BJ (cell line): ENCODE measurements at regions of chr18 and their contacts with region 1.

Region 1: GRCh38 chr18:50986360-50987087 is 18.7 kb downstream of the ELAC1 start:
- DNase-seq: peak; percentile 60
- H3K4me3 ChIP-seq: no peak overlapping the region
- H3K27me3 ChIP-seq: no peaks in the 10 kb centered on the region
- CTCF ChIP-seq: peak; percentile 11; the same call in 1 of the 2 replicates

Region 2: GRCh38 chr18:51009072-51009471 is 22.5 kb after region 1 on chr18:
- CTCF ChIA-PET with region 1: interaction called, 12 read pairs
- POLR2A ChIA-PET with region 1: no interaction called
- DNase-seq: no peak
- H3K4me3 ChIP-seq: no peak overlapping the region
- H3K27me3 ChIP-seq: no peaks in the 10 kb centered on the region
- CTCF ChIP-seq: no peak